OCI-LY7 (cell line): ENCODE measurements at regions of chr4 and their contacts with region 1.

Region 1: DNA sequence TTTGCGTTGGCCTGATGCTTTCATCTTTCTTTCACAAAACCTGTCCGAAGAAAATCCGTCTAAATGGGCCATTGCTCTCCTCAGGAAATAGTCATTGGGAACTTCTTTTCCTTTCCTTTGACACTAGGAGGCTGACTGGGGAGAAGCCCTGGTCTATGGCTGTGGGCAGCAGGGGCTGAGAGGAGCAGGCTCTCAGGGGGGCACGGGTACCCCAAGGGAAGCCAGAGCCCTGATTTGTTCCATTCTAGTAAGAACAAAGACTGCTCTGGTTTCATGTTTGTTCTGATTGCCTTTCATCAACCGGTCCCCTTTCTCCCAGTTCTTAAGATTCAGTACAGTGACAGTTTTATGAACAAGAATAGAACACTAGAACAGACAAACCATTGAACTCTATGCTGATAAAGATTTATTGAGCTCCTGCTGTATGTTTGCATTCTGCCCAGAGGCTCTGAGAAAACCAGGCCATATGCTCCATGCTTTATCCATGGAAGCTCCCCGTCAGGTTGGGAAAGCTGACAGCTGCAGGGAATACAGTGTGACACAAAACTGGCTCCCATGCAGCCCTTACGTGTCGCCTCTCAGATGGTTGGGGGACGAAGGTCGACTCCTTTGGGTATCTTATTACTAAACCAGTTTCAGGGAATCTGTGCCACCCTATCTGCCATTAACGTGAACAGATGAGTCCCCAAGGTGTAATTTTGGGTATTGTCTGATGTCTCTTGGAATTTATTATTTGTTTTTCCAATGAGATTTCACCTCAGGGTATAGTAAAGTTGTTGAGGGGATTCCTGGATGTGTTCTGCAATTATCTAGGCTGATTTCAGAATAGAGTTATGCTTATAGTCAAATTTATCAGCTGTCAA is 72.4 kb upstream of the MSANTD1 start:
- DNase-seq: no peak
- H3K4me3 ChIP-seq: no peak overlapping the region
- H3K27ac ChIP-seq: no peak overlapping the region
- H3K4me1 ChIP-seq: no peaks in the 10 kb centered on the region
- CTCF ChIP-seq: no peak

Region 2: GRCh38 chr4:3148926-3149325 is 27.7 kb before region 1 on chr4:
- CTCF ChIA-PET with region 1: no interaction called
- POLR2A ChIA-PET with region 1: interaction called, 10 read pairs
- intact Hi-C with region 1: no loop called
- DNase-seq: no peak
- H3K4me3 ChIP-seq: no peak overlapping the region
- H3K27ac ChIP-seq: no peak overlapping the region
- H3K4me1 ChIP-seq: no peaks in the 10 kb centered on the region
- CTCF ChIP-seq: no peak

Region 3: DNA sequence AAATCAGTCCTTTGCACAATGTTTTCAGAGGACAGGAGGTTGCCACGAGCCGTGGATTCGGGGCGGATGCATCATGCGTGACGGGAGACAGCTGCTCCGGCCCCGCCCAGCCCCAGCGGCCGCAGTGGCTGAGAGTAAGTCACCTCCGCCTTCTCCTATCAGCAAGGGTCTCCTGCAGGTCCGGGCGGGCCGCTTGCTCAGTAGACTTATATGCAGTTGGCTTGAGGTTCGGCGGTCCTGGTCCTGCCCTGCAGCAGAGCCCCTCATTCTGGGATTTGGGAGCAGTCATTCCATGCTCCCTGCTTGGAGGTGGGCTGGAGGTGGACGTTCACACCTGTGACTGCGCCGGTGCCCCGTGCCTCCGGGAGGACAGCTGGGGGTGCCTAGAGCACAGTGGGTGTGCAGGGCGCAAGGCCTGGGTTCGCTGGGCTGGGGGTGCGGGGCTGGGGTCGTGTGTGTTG is 503.3 kb after region 1 on chr4:
- CTCF ChIA-PET with region 1: no interaction called
- POLR2A ChIA-PET with region 1: no interaction called
- intact Hi-C with region 1: no loop called
- DNase-seq: peak; percentile 89
- H3K4me3 ChIP-seq: peak overlapping the region; percentile 57
- H3K27ac ChIP-seq: peak overlapping the region; percentile 95
- H3K4me1 ChIP-seq: peaks cover 40% of the 10 kb centered on the region
- CTCF ChIP-seq: no peak